ENCODE measurements at regions of chr7 and their contacts with region 1.

Region 1: GRCh38 chr7:151315038-151315655 is 26.5 kb upstream of the NUB1 start:
- DNase-seq: peak; percentile 68
- ATAC-seq: peak; percentile 84 to 85

Region 2: DNA sequence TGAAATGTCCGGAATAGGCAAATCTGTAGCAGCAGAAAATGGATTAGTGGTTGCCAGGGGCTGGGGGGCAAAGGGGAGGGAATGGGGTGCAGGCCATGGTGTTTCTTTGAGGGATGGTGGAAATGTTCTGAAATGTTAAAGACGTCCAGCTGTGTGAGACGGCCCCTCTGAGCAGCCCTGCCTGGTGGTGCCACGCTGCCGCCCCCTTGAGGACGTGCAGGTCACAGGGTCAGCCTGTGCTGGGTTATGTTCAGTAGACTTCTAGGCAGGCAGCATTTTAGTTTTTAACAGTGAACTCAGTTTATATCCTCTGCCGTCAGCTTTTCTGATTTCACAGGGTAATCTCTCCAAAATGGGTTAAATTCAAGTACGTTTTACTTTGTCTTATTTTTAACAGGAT is 35.9 kb after region 1 on chr7:
- intact Hi-C with region 1: loop called (anchors 1 to 5 kb)
- DNase-seq: no peak
- ATAC-seq: peak in 1 of 2 donors; percentile 35

Region 3: GRCh38 chr7:151432791-151433521 is 117.8 kb after region 1 on chr7:
- intact Hi-C with region 1: no loop called
- DNase-seq: no peak
- ATAC-seq: no peak